ENCODE measurements at regions of chr1 and their contacts with region 1.

Region 1: DNA sequence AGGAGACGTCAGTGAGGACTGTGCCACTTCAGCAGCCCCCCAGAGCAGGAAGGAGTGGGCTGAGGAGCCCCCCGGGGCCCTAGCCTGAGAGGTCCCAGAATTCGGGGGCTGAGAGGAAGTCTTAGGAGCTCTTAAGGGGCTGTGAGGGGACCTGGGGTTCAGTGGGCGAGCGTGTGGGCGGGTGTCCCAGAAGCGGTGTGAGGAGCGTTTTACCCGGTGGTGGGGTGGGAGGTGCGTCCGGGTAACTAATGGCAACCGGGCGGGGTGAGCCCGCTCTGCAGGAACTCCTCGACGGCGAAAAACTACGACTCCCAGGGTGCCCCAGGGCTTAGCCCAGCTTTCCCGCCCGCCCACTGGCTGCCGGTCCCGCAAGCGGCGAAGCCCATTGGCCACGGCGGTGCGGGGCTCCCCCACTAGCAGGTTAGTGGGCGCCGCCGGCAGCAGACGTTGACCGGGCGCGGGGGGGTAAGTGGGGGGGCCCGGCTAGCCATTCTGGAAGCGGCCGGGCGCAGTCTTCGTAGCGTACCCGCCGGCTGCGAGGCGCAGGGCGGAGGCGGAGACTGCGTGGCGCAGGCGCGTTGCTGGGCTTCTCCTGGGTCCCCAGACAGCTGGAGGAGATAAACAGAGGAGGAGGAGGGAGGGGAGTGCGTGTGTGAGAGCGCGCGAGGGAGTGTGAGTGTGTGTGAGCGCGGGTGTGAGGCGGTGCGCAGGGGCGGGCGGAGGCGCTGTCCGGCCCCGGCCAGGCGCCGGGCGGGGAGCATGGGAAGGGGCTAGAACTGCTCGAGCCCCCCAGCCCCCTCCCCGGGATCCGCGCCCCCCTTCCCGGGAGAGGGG is at the start of gene WDTC1:
- DNase-seq: peak; percentile 97 to 99 (median 98)
- ATAC-seq: peak; percentile 90
- H3K4me3 ChIP-seq: peak within 1 kb of the TSS; percentile 58 to 66
- H3K4me3 Mint-ChIP-seq: peak within 1 kb of the TSS; percentile 99
- H3K27ac ChIP-seq: peak within 1 kb of the TSS; percentile 74 to 93
- H3K27ac Mint-ChIP-seq: peak within 1 kb of the TSS; percentile 95
- H3K4me1 ChIP-seq: peaks cover 25% of the 10 kb centered on the region
- H3K4me1 Mint-ChIP-seq: peaks cover 37% of the 10 kb centered on the region
- H3K27me3 ChIP-seq: no peaks in the 10 kb centered on the region
- H3K27me3 Mint-ChIP-seq: no peaks in the 10 kb centered on the region
- CTCF ChIP-seq: no peak
- total RNA-seq, gene WDTC1: 17.8 to 18.1 TPM

Region 2: DNA sequence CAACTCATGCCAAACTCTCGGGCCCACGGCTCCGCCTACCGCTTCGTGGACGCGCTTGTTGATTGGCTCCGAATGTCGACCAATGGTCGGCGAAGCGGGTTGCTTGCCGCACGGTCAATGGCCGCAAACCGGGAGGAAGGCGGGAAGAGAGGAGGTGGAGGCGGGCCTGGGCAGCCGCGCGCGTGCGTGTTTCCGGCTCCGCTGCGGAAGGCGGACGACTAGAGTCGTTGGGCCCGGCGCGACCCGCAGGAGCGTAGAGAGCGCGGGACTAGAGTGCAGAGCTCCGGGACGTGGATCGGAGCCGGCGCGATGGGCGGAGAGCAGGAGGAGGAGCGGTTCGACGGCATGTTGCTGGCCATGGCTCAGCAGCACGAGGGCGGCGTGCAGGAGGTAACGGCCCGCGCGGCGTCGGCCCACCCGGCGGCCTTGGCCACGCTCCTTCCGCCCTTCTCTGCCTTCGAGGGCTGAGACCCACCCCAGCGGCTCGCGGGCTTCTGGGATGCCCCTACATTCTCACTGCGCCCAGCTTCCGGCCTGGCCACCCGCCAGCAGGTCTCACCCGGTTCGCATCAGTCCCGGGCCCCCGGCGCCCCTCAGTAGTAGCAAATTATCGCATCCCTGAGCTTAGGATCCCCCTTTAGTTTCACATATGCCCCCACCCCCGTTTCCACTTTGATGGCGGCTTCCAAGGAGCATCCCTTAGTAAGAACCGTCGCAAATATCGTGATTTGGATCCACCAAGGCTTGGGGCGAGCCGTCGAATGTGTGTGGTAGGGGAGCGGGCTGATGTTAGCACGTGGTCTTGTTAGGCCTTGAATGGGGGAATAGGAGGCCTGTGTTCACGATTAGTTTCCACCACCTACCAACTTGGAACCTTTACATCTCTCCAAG is 312.5 kb before region 1 on chr1 and contains the start of gene NUDC:
- CTCF ChIA-PET with region 1: no interaction called
- POLR2A ChIA-PET with region 1: no interaction called
- intact Hi-C with region 1: loop called (anchors 1 to 2 kb)
- DNase-seq: peak; percentile 91 to 98 (median 94)
- ATAC-seq: peak; percentile 92
- H3K4me3 ChIP-seq: peak within 1 kb of the TSS; percentile 84 to 95
- H3K4me3 Mint-ChIP-seq: peak within 1 kb of the TSS; percentile 95
- H3K27ac ChIP-seq: peak within 1 kb of the TSS; percentile 87 to 90
- H3K27ac Mint-ChIP-seq: peak within 1 kb of the TSS; percentile 99
- H3K4me1 ChIP-seq: peaks cover 23% of the 10 kb centered on the region
- H3K4me1 Mint-ChIP-seq: peaks cover 34% of the 10 kb centered on the region
- H3K27me3 ChIP-seq: no peaks in the 10 kb centered on the region
- H3K27me3 Mint-ChIP-seq: no peaks in the 10 kb centered on the region
- CTCF ChIP-seq: no peak
- total RNA-seq, gene NUDC: 51.9 to 55.0 TPM

Region 3: GRCh38 chr1:27321813-27322577 is 87.7 kb after region 1 on chr1 and contains the start of gene TMEM222:
- CTCF ChIA-PET with region 1: no interaction called
- POLR2A ChIA-PET with region 1: no interaction called
- intact Hi-C with region 1: loop called (anchors 1 kb)
- DNase-seq: peak; percentile 95 to 99 (median 97)
- ATAC-seq: peak; percentile 93
- H3K4me3 ChIP-seq: peak within 1 kb of the TSS; percentile 95 to 99
- H3K4me3 Mint-ChIP-seq: peak within 1 kb of the TSS; percentile 98
- H3K27ac ChIP-seq: peak within 1 kb of the TSS; percentile 88 to 95
- H3K27ac Mint-ChIP-seq: peak within 1 kb of the TSS; percentile 97
- H3K4me1 ChIP-seq: peaks cover 40% of the 10 kb centered on the region
- H3K4me1 Mint-ChIP-seq: peaks cover 48% of the 10 kb centered on the region
- H3K27me3 ChIP-seq: no peaks in the 10 kb centered on the region
- H3K27me3 Mint-ChIP-seq: no peaks in the 10 kb centered on the region
- CTCF ChIP-seq: no peak
- total RNA-seq, gene TMEM222: 24.1 to 25.2 TPM

Region 4: GRCh38 chr1:27489910-27490741 is 255.9 kb after region 1 on chr1 and contains the start of gene WASF2:
- CTCF ChIA-PET with region 1: no interaction called
- POLR2A ChIA-PET with region 1: no interaction called
- intact Hi-C with region 1: loop called (anchors 1 kb)
- DNase-seq: peak; percentile 93 to 98 (median 97)
- ATAC-seq: peak; percentile 95
- H3K4me3 ChIP-seq: peak within 1 kb of the TSS; percentile 97 to 99
- H3K4me3 Mint-ChIP-seq: peak within 1 kb of the TSS; percentile 98
- H3K27ac ChIP-seq: peak within 1 kb of the TSS; percentile 93 to 97
- H3K27ac Mint-ChIP-seq: peak within 1 kb of the TSS; percentile 99
- H3K4me1 ChIP-seq: peaks cover 19% of the 10 kb centered on the region
- H3K4me1 Mint-ChIP-seq: peaks cover 35% of the 10 kb centered on the region
- H3K27me3 ChIP-seq: no peaks in the 10 kb centered on the region
- H3K27me3 Mint-ChIP-seq: no peaks in the 10 kb centered on the region
- CTCF ChIP-seq: no peak
- total RNA-seq, gene WASF2: 91.6 to 95.0 TPM

Region 5: GRCh38 chr1:27772933-27773825 is 538.9 kb after region 1 on chr1 and contains the start of gene STX12:
- CTCF ChIA-PET with region 1: no interaction called
- POLR2A ChIA-PET with region 1: no interaction called
- intact Hi-C with region 1: loop called in 1 of 2 experiments (anchors 5 kb)
- DNase-seq: peak; percentile 96 to 100 (median 98)
- ATAC-seq: peak; percentile 91
- H3K4me3 ChIP-seq: peak within 1 kb of the TSS; percentile 94 to 98
- H3K4me3 Mint-ChIP-seq: peak within 1 kb of the TSS; percentile 91
- H3K27ac ChIP-seq: peak within 1 kb of the TSS; percentile 76 to 94
- H3K27ac Mint-ChIP-seq: peak within 1 kb of the TSS; percentile 98
- H3K4me1 ChIP-seq: peaks cover 16% of the 10 kb centered on the region
- H3K4me1 Mint-ChIP-seq: peaks cover 37% of the 10 kb centered on the region
- H3K27me3 ChIP-seq: no peaks in the 10 kb centered on the region
- H3K27me3 Mint-ChIP-seq: no peaks in the 10 kb centered on the region
- CTCF ChIP-seq: no peak
- total RNA-seq, gene STX12: 21.0 to 26.0 TPM

Region 6: DNA sequence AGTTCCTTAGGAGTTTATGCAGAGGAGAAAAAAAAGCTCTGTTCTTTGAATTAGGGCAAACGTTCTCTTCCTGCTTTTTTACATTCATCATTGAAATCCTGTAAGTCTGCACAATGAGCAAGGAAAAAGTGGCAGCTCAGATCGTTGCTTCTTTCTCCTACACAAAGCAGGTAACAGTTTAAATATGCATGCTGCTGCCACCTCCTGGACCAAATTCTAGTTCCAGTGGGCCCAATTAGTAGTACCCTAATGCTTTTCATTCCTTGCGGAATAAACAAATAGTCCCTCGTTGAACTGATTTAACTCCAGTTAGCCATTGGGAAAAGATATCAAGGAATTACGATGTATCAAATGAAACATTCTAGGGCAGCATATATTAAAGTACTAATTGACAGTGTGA is 1522.6 kb after region 1 on chr1:
- CTCF ChIA-PET with region 1: no interaction called
- POLR2A ChIA-PET with region 1: no interaction called
- intact Hi-C with region 1: no loop called
- DNase-seq: peak in 3 of 9 experiments; percentile 22 to 45 (median 36)
- ATAC-seq: no peak
- H3K4me3 ChIP-seq: no peak overlapping the region
- H3K4me3 Mint-ChIP-seq: no peak overlapping the region
- H3K27ac ChIP-seq: no peak overlapping the region
- H3K27ac Mint-ChIP-seq: no peak overlapping the region
- H3K4me1 ChIP-seq: peaks cover 37% of the 10 kb centered on the region
- H3K4me1 Mint-ChIP-seq: peaks cover 42% of the 10 kb centered on the region
- H3K27me3 ChIP-seq: no peaks in the 10 kb centered on the region
- H3K27me3 Mint-ChIP-seq: no peaks in the 10 kb centered on the region
- CTCF ChIP-seq: peak; percentile 39

Measured in CD8-positive, alpha-beta T cell (primary cell).